Transverse colon (tissue), 4 donors: ENCODE measurements at regions of chr1 and their contacts with region 1.

Region 1: GRCh38 chr1:225480825-225481434 is 53.1 kb upstream of the LBR start:
- DNase-seq: peak; percentile 79
- H3K4me3 ChIP-seq: no peak overlapping the region
- H3K27ac ChIP-seq: peak overlapping the region in 2 of 4 donors; percentile 5 to 59
- H3K4me1 ChIP-seq: peaks cover 0 to 23% (median 8%) of the 10 kb centered on the region in 4 donors
- H3K27me3 ChIP-seq: no peaks in the 10 kb centered on the region
- CTCF ChIP-seq: peak; percentile 84 to 88 (median 86)
- EP300 ChIP-seq: no peak
- POLR2A ChIP-seq: no peak

Region 2: DNA sequence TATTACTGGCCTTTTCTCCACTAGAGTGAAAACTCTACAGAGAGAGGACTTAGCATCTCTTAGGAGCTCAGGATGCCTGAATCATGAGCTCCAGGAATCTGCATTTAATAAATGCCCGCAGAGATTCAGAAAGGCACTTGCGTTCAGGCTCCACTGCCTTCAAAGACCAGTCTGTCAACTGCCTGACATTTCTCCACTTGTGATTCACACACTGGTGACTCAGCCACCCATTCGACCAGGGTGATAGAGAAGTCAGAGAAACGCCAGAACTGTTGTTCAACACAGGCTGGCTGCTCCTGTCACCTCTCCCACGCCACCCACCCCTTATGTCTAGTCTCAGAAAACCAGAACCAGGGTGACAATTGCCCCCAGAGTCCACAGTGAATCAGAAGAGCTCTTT is 26.2 kb before region 1 on chr1:
- in situ Hi-C with region 1: no loop called
- intact Hi-C with region 1: no loop called
- DNase-seq: peak; percentile 14
- H3K4me3 ChIP-seq: no peak overlapping the region
- H3K27ac ChIP-seq: peak overlapping the region; percentile 22 to 93 (median 90)
- H3K4me1 ChIP-seq: peaks cover 0 to 22% (median 12%) of the 10 kb centered on the region in 4 donors
- H3K27me3 ChIP-seq: no peaks in the 10 kb centered on the region
- CTCF ChIP-seq: no peak
- EP300 ChIP-seq: no peak
- POLR2A ChIP-seq: no peak

Region 3: GRCh38 chr1:225652729-225653462 is 172.0 kb after region 1 on chr1 and contains the start of gene ENAH:
- in situ Hi-C with region 1: no loop called
- intact Hi-C with region 1: loop called (anchors 10 kb)
- DNase-seq: peak; percentile 78
- H3K4me3 ChIP-seq: peak within 1 kb of the TSS; percentile 63 to 97 (median 84)
- H3K27ac ChIP-seq: peak within 1 kb of the TSS; percentile 91 to 95 (median 94)
- H3K4me1 ChIP-seq: peaks cover 0 to 34% (median 6%) of the 10 kb centered on the region in 4 donors
- H3K27me3 ChIP-seq: no peaks in the 10 kb centered on the region
- CTCF ChIP-seq: no peak
- EP300 ChIP-seq: no peak
- POLR2A ChIP-seq: no peak
- total RNA-seq, gene ENAH: 14.7 to 140 (median 33.9) TPM

Region 4: DNA sequence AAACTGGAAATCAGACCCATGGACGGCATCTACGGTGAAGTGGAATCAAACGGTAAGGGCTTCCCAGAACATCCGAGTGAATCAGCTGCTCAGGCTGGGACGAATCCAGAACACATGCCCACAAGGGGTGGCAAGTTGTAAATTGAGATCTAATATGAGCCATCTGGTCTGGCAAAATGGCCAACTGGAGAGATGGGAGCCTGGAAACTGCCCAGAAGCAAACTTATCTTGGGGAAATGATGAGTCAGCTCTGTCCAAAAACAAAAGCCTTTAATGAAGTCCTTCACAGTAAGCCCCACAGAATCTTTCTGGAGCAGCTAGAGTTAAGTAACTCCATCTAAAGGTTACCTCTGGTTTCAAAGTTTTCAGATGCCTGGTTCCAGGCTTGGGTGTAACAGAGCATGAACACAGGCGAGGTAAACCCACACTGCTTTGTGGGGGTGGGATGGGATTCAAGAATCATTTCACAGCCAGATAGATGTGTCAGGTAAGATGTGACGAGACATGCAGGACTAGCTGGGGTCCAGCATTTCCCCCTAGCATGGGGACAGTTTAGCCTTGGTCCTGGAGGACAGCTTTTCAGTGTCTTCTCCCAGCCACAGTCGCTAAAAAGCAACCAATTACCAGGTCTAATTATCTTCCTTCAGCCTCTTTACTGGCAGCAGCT is 286.2 kb after region 1 on chr1:
- in situ Hi-C with region 1: loop called (anchors 5 to 25 kb)
- intact Hi-C with region 1: no loop called
- DNase-seq: peak; percentile 33
- H3K4me3 ChIP-seq: no peak overlapping the region
- H3K27ac ChIP-seq: peak overlapping the region; percentile 62 to 75 (median 70)
- H3K4me1 ChIP-seq: peaks cover 7 to 46% (median 17%) of the 10 kb centered on the region in 4 donors
- H3K27me3 ChIP-seq: no peaks in the 10 kb centered on the region
- CTCF ChIP-seq: no peak
- EP300 ChIP-seq: peak; percentile 21
- POLR2A ChIP-seq: no peak

Region 5: DNA sequence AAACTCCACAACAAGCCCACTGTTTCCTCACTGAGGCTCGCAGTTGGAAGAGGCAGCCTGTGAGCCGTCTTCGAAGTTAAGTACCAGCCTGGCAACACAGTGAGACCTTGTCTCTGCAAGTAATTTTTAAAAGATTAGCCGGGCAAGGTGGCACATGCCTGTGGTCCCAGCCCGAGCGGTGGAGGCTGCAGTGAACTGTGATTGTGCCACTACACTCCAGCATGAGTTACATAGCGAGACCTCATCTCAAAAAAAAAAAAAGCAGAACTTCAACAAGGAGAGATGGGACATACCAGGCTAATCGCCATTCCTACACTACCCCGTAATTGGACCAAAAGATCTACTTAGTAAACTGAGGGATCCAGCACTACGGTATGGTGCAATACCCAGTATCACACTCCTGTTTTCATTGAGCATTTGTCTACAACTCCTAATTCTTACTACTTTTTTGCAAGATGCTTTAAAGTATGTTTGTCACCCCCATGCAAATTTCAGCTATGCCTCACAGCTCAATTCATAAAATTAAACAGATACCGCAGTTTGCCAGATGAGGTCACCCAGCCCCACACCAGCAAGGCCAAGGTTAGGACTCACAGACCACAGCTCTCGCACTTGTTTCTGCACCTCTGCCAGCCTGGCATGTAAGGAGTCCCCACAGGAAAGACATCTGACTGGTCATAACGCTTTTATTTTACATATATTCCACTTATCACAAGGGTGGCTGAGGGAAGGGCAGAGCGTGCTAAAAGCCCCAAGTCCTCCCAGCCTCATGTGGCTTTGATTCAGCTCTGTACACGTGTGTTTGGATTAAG is 497.2 kb after region 1 on chr1:
- in situ Hi-C with region 1: loop called (anchors 5 to 10 kb)
- intact Hi-C with region 1: loop called (anchors 5 kb)
- DNase-seq: no peak
- H3K4me3 ChIP-seq: no peak overlapping the region
- H3K27ac ChIP-seq: no peak overlapping the region
- H3K4me1 ChIP-seq: peaks cover 0 to 22% (median 15%) of the 10 kb centered on the region in 4 donors
- H3K27me3 ChIP-seq: no peaks in the 10 kb centered on the region
- CTCF ChIP-seq: no peak
- EP300 ChIP-seq: no peak
- POLR2A ChIP-seq: no peak

Region 6: DNA sequence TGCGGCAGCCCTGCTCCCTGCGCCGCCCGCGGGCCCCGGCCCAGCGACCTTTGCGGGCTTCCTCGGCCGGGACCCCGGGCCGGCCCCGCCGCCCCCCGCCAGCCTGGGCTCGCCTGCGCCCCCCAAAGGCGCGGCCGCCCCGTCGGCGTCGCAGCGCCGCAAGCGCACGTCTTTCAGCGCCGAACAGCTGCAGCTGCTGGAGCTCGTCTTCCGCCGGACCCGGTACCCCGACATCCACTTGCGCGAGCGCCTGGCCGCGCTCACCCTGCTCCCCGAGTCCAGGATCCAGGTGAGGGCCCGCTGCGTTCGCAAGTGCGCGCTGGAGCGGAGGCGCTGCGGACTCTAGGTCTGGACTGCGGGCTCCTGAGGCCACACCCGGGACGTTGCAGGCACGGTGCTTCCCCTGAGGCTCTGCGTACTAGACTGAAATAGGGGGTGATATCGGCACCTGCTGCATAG is 742.9 kb after region 1 on chr1:
- in situ Hi-C with region 1: no loop called
- intact Hi-C with region 1: no loop called
- DNase-seq: peak; percentile 60
- H3K4me3 ChIP-seq: peak overlapping the region in 3 of 4 donors; percentile 35 to 56 (median 42)
- H3K27ac ChIP-seq: peak overlapping the region in 1 of 4 donors; percentile 10
- H3K4me1 ChIP-seq: peaks cover 0 to 10% (median 8%) of the 10 kb centered on the region in 4 donors
- H3K27me3 ChIP-seq: peaks cover 38% of the 10 kb centered on the region
- CTCF ChIP-seq: no peak
- EP300 ChIP-seq: no peak
- POLR2A ChIP-seq: no peak